GM18951 (cell line): ENCODE measurements at regions of chr12 and their contacts with region 1.

Region 1: DNA sequence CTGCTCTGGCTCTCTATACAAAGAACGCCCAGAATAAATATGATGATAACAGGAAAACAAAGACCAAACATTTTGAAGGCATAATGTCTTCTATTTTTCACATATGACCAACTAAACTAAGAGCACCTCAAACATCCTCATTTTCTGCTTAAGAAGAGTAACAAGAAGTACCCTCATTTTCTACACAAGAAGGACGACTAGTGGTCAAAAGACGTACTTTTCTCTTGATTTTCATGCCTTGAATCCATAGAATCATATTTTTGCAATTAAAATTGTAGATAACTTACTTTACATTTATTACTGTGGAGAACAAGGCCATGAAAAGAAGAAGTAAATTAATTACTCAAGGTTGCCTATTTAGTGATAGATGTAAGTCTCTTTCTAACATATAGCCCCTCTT is 358.6 kb downstream of the DUSP6 start:
- POLR2A ChIP-seq: no peak

Region 2: DNA sequence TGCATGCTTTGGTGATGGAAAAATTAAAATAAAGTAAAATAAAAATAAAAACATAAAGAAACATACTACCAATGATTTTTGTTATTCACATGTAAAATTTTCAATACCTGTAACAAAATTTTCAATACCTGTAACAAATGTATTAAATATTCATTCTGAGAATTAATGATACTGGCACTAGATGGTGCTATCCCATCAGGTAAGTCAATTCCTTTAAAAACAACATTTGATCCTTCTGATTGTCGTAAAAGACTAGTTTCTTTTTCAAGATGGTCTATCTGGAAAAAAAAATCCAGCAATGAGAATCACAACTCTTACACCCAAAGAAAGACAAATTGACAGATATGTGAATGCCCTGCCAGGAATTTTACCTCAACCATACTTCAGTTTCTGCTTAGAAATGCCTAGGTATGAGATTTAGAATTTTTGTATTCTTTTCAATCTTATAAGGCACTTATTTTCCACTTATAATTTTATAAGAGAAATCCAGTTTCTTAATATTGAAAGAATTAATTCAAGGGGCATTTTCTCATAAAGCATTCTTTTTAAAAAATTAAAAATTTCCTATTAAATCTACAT is 882.5 kb before region 1 on chr12:
- in situ Hi-C with region 1: loop called (anchors 25 kb)
- POLR2A ChIP-seq: no peak

Region 3: GRCh38 chr12:89236748-89237388 is 243.2 kb after region 1 on chr12:
- in situ Hi-C with region 1: no loop called
- POLR2A ChIP-seq: no peak

Region 4: DNA sequence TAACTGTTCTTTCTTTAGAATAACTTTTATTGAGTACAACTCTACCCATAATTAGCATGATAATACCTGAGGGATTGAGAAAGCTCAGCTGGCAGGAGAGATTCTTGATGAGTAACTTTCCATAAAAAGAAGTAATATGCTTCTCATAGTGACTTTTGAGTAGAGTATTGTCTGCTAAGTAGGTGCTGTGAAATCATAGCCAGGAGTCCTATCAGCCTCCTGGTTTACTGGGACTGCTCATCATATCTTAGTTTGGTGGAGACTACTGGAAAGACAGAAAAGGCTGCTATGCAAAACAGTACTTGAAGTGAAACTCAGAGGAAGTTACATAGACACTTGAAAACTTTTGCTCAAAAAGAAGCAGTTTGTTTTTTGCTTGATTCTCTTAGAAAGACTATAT is 828.2 kb after region 1 on chr12:
- in situ Hi-C with region 1: no loop called
- POLR2A ChIP-seq: no peak